Activated naive CD4-positive, alpha-beta T cell treated with anti-CD3 and anti-CD28 coated beads, Interleukin-2, amount 10 ng/mL, durations not matched to agents 7 days and 5 days (primary cell): ENCODE measurements at regions of chr2 and their contacts with region 1.

Region 1: GRCh38 chr2:64523666-64524603 is at the start of gene AFTPH:
- DNase-seq: peak; percentile 100
- H3K4me3 Mint-ChIP-seq: peak within 1 kb of the TSS; percentile 99
- H3K27ac Mint-ChIP-seq: peak within 1 kb of the TSS; percentile 99
- H3K4me1 Mint-ChIP-seq: peaks cover 39% of the 10 kb centered on the region
- H3K27me3 Mint-ChIP-seq: peaks cover 8% of the 10 kb centered on the region

Region 2: GRCh38 chr2:64447317-64448040 is 76.5 kb before region 1 on chr2:
- CTCF ChIA-PET with region 1: no interaction called
- DNase-seq: no peak
- H3K4me3 Mint-ChIP-seq: no peak overlapping the region
- H3K27ac Mint-ChIP-seq: no peak overlapping the region
- H3K4me1 Mint-ChIP-seq: no peaks in the 10 kb centered on the region
- H3K27me3 Mint-ChIP-seq: peaks cover 33% of the 10 kb centered on the region

Region 3: DNA sequence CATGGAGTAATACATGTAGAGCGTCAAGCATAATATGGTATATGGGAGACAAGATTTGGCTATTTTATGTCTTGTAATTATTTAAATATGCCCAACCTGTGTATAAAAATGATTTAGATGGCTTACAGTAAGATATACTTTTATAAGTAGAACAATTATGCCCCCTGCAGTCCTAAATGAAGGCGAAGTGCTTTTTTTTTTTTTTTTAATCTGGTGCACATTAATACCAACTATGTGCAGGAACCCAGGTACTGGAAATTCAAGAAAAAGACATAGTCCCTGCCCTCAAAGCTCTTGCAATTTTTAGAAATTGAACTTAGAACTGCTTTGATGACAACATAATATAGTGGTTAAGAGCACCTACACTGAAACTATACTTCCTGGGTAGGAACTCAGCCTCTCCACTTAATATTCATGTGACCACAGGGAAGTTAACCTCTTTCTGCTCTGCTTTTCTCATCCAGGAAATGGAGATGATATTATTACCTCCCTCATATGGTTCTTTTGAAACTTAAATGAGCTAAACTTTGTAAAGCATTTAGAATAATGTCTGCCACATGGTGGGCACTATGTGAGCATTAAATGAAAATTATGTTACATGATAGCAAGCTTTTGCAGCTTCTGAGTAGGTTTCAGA is 38.3 kb after region 1 on chr2:
- CTCF ChIA-PET with region 1: interaction called, 88 read pairs
- DNase-seq: no peak
- H3K4me3 Mint-ChIP-seq: no peak overlapping the region
- H3K27ac Mint-ChIP-seq: no peak overlapping the region
- H3K4me1 Mint-ChIP-seq: peaks cover 27% of the 10 kb centered on the region
- H3K27me3 Mint-ChIP-seq: no peaks in the 10 kb centered on the region

Region 4: GRCh38 chr2:64866466-64867196 is 342.7 kb after region 1 on chr2:
- CTCF ChIA-PET with region 1: interaction called, 15 read pairs
- DNase-seq: no peak
- H3K4me3 Mint-ChIP-seq: no peak overlapping the region
- H3K27ac Mint-ChIP-seq: no peak overlapping the region
- H3K4me1 Mint-ChIP-seq: no peaks in the 10 kb centered on the region
- H3K27me3 Mint-ChIP-seq: peaks cover 45% of the 10 kb centered on the region